Activated CD4-positive, alpha-beta T cell treated with anti-CD3 and anti-CD28 coated beads, Interleukin-2, amount 10 ng/mL, durations not matched to agents 24 days and 14 days (primary cell): ENCODE measurements at regions of chr18 and their contacts with region 1.

Region 1: DNA sequence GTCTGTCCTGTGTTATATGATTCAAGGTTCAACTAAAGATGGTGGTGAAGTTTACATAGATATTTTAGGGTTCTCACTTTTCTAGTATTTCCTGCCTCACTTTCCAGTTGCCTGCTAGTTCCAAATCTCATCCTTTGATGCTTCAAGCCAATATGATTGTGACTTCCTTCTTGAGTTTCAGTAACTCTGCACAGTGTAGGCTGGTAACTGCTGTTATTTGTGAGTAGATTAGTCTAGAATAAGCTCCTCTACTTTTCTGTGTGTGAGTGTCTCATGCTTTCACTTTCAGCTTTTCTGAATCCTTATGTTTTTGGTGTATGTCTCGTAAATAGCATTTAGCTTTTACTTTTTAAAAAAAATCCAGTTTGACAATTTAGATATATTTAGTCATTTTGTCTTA is 42.6 kb downstream of the GALNT1 start:
- DNase-seq: peak; percentile 63
- H3K4me3 Mint-ChIP-seq: peak overlapping the region; percentile 20
- H3K27ac Mint-ChIP-seq: peak overlapping the region; percentile 21
- H3K4me1 Mint-ChIP-seq: peaks cover 15% of the 10 kb centered on the region
- H3K27me3 Mint-ChIP-seq: no peaks in the 10 kb centered on the region

Region 2: DNA sequence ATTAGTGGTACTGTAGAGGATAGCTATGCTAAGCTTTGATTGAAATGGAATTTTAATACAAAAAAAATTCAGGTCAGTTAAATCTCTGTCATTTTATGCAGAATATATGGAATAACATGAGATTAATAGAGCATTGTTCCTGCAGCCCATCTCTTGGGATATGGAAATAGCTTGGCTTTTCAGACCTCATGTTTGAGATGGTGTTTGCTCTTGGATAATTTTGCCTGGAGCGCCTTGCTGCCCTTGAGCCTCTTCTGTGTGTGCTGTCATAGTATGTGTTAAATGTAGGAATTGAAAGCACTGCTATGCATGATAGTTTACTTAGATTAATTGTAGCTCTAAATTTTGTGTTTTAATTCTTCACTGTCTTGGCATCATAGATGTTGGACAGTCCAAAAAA is 14.9 kb before region 1 on chr18:
- intact Hi-C with region 1: loop called (anchors 2 kb)
- DNase-seq: no peak
- H3K4me3 Mint-ChIP-seq: no peak overlapping the region
- H3K27ac Mint-ChIP-seq: no peak overlapping the region
- H3K4me1 Mint-ChIP-seq: peaks cover 7% of the 10 kb centered on the region
- H3K27me3 Mint-ChIP-seq: no peaks in the 10 kb centered on the region

Region 3: DNA sequence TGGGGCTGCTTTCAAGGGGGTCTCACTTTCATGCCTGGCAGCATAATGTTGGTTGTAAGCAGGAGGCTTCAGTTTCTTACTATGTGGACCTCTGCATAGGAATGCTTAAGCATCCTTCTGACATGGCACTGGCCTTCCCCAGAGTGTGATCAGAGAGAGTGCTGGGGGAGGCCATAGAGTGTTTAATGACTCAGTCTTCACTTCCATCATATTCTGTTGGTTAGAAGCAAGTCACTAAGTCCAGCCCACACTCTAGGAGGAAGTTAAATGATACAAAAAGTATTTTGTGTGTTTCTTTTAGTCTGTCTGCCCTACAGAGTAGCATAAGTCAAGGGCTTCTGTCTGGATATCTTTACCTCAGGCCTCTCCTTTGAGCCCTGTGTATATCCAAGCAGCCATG is 22.3 kb after region 1 on chr18:
- intact Hi-C with region 1: no loop called
- DNase-seq: no peak
- H3K4me3 Mint-ChIP-seq: no peak overlapping the region
- H3K27ac Mint-ChIP-seq: no peak overlapping the region
- H3K4me1 Mint-ChIP-seq: no peaks in the 10 kb centered on the region
- H3K27me3 Mint-ChIP-seq: no peaks in the 10 kb centered on the region

Region 4: GRCh38 chr18:35661483-35662146 is 37.5 kb after region 1 on chr18:
- intact Hi-C with region 1: no loop called
- DNase-seq: no peak
- H3K4me3 Mint-ChIP-seq: no peak overlapping the region
- H3K27ac Mint-ChIP-seq: no peak overlapping the region
- H3K4me1 Mint-ChIP-seq: no peaks in the 10 kb centered on the region
- H3K27me3 Mint-ChIP-seq: no peaks in the 10 kb centered on the region

Region 5: DNA sequence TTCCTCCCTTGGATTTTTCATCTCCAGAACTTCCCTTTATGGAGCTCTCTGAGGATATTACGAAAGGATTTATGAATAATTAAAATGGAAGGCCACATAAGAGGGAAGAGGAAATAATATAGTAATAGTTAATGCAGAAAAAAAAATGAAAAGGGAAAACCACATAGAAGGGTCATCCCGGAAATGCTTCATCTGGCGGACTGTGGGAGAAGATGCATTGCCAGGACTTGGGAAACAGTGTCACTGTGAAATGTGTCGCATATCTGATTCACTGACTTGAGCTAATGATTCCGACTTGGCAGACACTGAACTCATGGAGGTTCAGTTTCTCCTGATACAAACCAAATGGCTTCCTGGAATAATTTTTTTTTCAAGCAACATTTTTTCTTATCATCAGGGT is 218.4 kb after region 1 on chr18:
- intact Hi-C with region 1: no loop called
- DNase-seq: no peak
- H3K4me3 Mint-ChIP-seq: no peak overlapping the region
- H3K27ac Mint-ChIP-seq: no peak overlapping the region
- H3K4me1 Mint-ChIP-seq: no peaks in the 10 kb centered on the region
- H3K27me3 Mint-ChIP-seq: peaks cover 3% of the 10 kb centered on the region